B cell (primary cell): ENCODE measurements at regions of chr10 and their contacts with region 1.

Region 1: GRCh38 chr10:88582806-88583583 is at the start of gene RNLS:
- DNase-seq: peak; percentile 84
- ATAC-seq: peak; percentile 83
- H3K4me3 ChIP-seq: peak within 1 kb of the TSS; percentile 64 to 94 (median 89)
- H3K4me3 Mint-ChIP-seq: peak within 1 kb of the TSS; percentile 95
- H3K27ac ChIP-seq: peak within 1 kb of the TSS; percentile 89 to 94
- H3K27ac Mint-ChIP-seq: peak within 1 kb of the TSS; percentile 96
- H3K4me1 ChIP-seq: peaks cover 7 to 8% of the 10 kb centered on the region in 2 donors
- H3K4me1 Mint-ChIP-seq: peaks cover 13% of the 10 kb centered on the region
- H3K27me3 ChIP-seq: no peaks in the 10 kb centered on the region
- H3K27me3 Mint-ChIP-seq: no peaks in the 10 kb centered on the region
- CTCF ChIP-seq: peak; percentile 86
- total RNA-seq, gene RNLS: 7.5 and 7.9 TPM in 2 replicates

Region 2: GRCh38 chr10:87817609-87818504 is 765.1 kb before region 1 on chr10 and contains the start of gene ATAD1:
- CTCF ChIA-PET with region 1: interaction called, 6 read pairs
- POLR2A ChIA-PET with region 1: interaction called, 5 read pairs
- intact Hi-C with region 1: loop called (anchors 1 kb)
- DNase-seq: peak; percentile 93
- ATAC-seq: peak; percentile 81
- H3K4me3 ChIP-seq: peak within 1 kb of the TSS; percentile 84 to 93 (median 87)
- H3K4me3 Mint-ChIP-seq: peak within 1 kb of the TSS; percentile 96
- H3K27ac ChIP-seq: peak within 1 kb of the TSS; percentile 91 to 95
- H3K27ac Mint-ChIP-seq: peak within 1 kb of the TSS; percentile 97
- H3K4me1 ChIP-seq: peaks cover 15 to 25% of the 10 kb centered on the region in 2 donors
- H3K4me1 Mint-ChIP-seq: peaks cover 37% of the 10 kb centered on the region
- H3K27me3 ChIP-seq: no peaks in the 10 kb centered on the region
- H3K27me3 Mint-ChIP-seq: no peaks in the 10 kb centered on the region
- CTCF ChIP-seq: peak; percentile 16
- total RNA-seq, gene ATAD1: 41.5 and 44.9 TPM in 2 replicates

Region 3: DNA sequence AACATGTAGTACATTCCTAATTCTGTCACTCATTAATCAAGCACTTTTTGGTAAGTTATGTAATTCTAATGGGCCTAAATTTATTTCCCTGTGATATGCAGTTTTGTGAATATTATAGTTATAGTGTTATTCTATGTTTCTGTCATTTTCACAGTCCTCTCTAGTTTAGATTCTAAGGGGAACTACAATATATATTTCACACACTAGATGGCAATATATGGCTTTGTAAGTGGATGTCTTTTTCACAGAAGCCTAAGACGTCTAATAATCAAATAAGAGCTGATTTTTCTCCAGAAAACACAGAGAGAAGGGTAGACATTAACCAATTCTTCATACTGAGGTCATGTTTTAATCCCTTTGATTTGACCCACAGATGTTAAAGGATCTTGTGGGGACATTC is 17.9 kb before region 1 on chr10:
- CTCF ChIA-PET with region 1: interaction called, 10 read pairs
- POLR2A ChIA-PET with region 1: no interaction called
- intact Hi-C with region 1: no loop called
- DNase-seq: peak; percentile 36
- ATAC-seq: no peak
- H3K4me3 ChIP-seq: no peak overlapping the region
- H3K4me3 Mint-ChIP-seq: no peak overlapping the region
- H3K27ac ChIP-seq: no peak overlapping the region
- H3K27ac Mint-ChIP-seq: no peak overlapping the region
- H3K4me1 ChIP-seq: no peaks in the 10 kb centered on the region
- H3K4me1 Mint-ChIP-seq: no peaks in the 10 kb centered on the region
- H3K27me3 ChIP-seq: no peaks in the 10 kb centered on the region
- H3K27me3 Mint-ChIP-seq: no peaks in the 10 kb centered on the region
- CTCF ChIP-seq: peak; percentile 55

Region 4: DNA sequence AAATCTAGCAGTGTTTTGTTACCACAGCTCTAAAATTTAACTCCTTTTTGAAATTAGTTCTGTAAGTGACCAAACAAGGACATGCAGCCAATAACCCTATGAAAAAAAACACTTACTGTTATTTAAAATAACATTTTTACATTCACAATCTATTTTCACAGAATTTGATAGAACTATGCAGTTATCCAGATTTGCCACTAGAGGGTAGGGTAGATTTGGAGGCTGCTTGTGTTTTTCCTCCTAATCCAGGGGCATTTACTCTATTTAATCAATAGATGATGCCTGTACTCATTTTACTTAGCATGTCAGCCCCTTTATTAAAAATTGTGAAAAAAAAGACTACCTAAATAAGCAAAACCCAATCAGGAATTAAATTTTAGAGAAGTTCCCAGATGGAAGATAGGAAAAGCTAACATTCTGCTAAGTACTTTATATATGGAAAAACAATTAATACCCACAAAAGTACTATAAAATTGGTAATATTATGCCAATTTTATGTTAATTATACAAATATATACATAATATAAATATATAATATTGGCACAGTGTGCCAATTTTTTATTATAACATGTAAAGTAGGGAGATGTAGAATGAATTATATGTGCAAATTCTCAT is 105.0 kb after region 1 on chr10:
- CTCF ChIA-PET with region 1: no interaction called
- POLR2A ChIA-PET with region 1: no interaction called
- intact Hi-C with region 1: loop called (anchors 10 kb)
- DNase-seq: peak; percentile 19
- ATAC-seq: peak; percentile 36
- H3K4me3 ChIP-seq: no peak overlapping the region
- H3K4me3 Mint-ChIP-seq: no peak overlapping the region
- H3K27ac ChIP-seq: no peak overlapping the region
- H3K27ac Mint-ChIP-seq: no peak overlapping the region
- H3K4me1 ChIP-seq: no peaks in the 10 kb centered on the region
- H3K4me1 Mint-ChIP-seq: no peaks in the 10 kb centered on the region
- H3K27me3 ChIP-seq: peaks cover 0 to 1% (median 0%) of the 10 kb centered on the region in 4 experiments
- H3K27me3 Mint-ChIP-seq: peaks cover 10% of the 10 kb centered on the region
- CTCF ChIP-seq: peak; percentile 95

Region 5: GRCh38 chr10:88759366-88760101 is 176.5 kb after region 1 on chr10 and contains the start of gene LIPN:
- CTCF ChIA-PET with region 1: no interaction called
- POLR2A ChIA-PET with region 1: no interaction called
- intact Hi-C with region 1: no loop called
- DNase-seq: peak; percentile 33
- ATAC-seq: peak; percentile 69
- H3K4me3 ChIP-seq: no peak within 1 kb of the TSS
- H3K4me3 Mint-ChIP-seq: peak within 1 kb of the TSS; percentile 49
- H3K27ac ChIP-seq: no peak within 1 kb of the TSS
- H3K27ac Mint-ChIP-seq: peak within 1 kb of the TSS; percentile 71
- H3K4me1 ChIP-seq: peaks cover 6 to 8% of the 10 kb centered on the region in 2 donors
- H3K4me1 Mint-ChIP-seq: peaks cover 12% of the 10 kb centered on the region
- H3K27me3 ChIP-seq: no peaks in the 10 kb centered on the region
- H3K27me3 Mint-ChIP-seq: peaks cover 5% of the 10 kb centered on the region
- CTCF ChIP-seq: no peak
- total RNA-seq, gene LIPN: not detected in 2 replicates